Activated CD8-positive, alpha-beta memory T cell treated with anti-CD3 and anti-CD28 coated beads, Interleukin-2, amount 10 ng/mL, durations not matched to agents 7 days and 5 days (primary cell): ENCODE measurements at regions of chr15 and their contacts with region 1.

Region 1: GRCh38 chr15:89430530-89431341 is 65.6 kb downstream of the RHCG start:
- DNase-seq: peak; percentile 88
- ATAC-seq: peak; percentile 95
- H3K4me3 Mint-ChIP-seq: peak overlapping the region; percentile 68
- H3K27ac Mint-ChIP-seq: no peak overlapping the region
- H3K4me1 Mint-ChIP-seq: peaks cover 6% of the 10 kb centered on the region
- H3K27me3 Mint-ChIP-seq: peaks cover 32% of the 10 kb centered on the region

Region 2: DNA sequence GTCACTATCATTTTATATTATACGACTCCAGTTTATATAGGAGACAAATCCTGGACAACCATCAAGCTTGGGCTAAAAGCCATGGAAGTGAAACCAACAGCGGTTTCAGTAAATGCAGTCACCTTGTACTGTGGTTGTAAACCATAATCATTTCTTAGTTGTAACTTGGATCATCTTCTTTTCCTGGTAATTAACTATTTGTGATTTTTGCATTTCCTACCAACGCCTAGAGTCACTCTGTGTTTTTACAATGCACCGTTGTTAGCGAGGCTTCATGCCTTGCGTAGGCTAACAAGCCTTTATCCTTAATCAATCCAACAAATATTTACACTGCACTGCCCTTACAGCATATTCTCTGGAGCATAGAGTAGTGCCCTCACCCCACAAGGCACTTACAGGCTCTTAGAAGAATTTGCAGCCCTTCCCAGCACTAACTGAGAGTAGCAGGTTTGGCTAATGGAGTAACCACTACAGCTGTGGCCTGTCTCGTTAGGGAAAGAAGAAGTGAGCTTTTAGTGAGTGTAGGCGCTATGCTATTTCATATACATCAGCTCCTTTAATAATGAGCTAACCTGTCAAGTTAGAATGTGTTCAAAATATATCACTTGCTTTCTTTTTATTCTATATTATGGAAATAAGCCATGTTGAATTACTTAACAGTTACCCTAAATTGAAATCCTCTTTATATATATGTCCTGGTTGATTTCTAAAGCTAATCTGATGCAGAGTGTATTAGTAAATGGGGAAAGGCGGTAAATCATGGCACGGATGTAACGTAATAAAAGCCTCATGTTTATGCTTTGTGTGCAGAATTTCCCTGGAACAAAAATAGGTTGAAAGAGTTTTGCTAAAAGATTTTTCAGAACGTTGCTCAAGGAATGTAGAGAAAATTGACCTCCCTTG is 279.7 kb before region 1 on chr15:
- CTCF ChIA-PET with region 1: no interaction called
- DNase-seq: no peak
- ATAC-seq: no peak
- H3K4me3 Mint-ChIP-seq: no peak overlapping the region
- H3K27ac Mint-ChIP-seq: no peak overlapping the region
- H3K4me1 Mint-ChIP-seq: peaks cover 9% of the 10 kb centered on the region
- H3K27me3 Mint-ChIP-seq: no peaks in the 10 kb centered on the region

Region 3: DNA sequence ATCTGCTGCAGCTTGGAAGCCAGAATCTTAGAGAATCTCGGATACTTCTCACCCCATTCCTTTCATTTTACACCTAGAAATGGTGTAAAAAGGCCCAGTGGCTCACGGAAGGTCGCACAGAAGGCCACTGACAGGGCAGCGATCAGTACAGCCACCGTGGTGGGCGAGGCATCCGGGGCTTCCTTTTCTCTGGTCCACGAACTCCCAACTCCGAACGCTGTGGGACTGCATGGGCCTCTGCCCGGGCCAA is 59.8 kb before region 1 on chr15:
- CTCF ChIA-PET with region 1: no interaction called
- DNase-seq: no peak
- ATAC-seq: no peak
- H3K4me3 Mint-ChIP-seq: no peak overlapping the region
- H3K27ac Mint-ChIP-seq: no peak overlapping the region
- H3K4me1 Mint-ChIP-seq: peaks cover 6% of the 10 kb centered on the region
- H3K27me3 Mint-ChIP-seq: peaks cover 93% of the 10 kb centered on the region

Region 4: DNA sequence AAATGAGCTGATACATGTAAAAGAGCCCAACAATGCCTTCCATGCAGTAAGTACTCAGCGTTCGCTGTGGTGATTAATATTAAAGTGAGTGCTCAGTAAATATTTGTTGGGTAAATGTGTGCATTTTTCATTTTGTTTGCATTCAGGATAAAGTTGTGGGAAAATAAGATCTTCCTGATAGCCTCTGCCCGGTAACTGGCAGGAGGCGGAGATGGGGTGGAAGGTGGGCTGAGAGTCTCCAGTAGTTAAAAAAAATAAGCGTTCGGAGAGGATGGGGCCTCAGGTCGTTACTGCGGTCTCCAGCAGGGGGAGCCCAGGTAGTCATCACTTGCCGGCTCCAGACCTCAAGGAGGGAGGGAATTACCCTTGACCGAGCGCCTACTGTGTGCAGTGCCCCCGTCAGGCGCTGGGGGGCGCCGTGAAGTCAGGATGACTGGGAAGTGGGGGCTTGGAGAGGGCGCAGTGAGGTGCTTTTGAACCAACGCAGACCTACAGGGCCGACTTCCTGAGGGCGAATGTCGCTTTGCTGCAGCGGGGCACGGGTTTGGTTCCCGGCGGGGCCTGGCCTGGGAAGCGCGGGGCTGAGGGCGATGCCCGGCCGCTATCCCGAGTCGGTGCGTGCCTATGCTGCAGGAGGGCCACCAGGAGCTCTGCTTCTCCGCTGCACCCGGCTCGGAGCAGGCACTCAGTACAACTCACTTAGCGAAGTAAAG is 14.4 kb before region 1 on chr15:
- CTCF ChIA-PET with region 1: interaction called, 50 read pairs
- DNase-seq: peak; percentile 88
- ATAC-seq: peak; percentile 86
- H3K4me3 Mint-ChIP-seq: no peak overlapping the region
- H3K27ac Mint-ChIP-seq: no peak overlapping the region
- H3K4me1 Mint-ChIP-seq: peaks cover 11% of the 10 kb centered on the region
- H3K27me3 Mint-ChIP-seq: peaks cover 91% of the 10 kb centered on the region